Endothelial cell of umbilical vein (primary cell): ENCODE measurements at regions of chr4 and their contacts with region 1.

Region 1: GRCh38 chr4:138090150-138090917 is 151.8 kb downstream of the SLC7A11 start:
- DNase-seq: peak; percentile 90
- H3K4me3 ChIP-seq: peak overlapping the region in 2 of 3 experiments; percentile 11 to 53
- H3K27ac ChIP-seq: no peak overlapping the region
- H3K4me1 ChIP-seq: peaks cover 6% of the 10 kb centered on the region
- H3K27me3 ChIP-seq: no peaks in the 10 kb centered on the region
- CTCF ChIP-seq: peak; percentile 60 to 62
- POLR2A ChIP-seq: no peak

Region 2: GRCh38 chr4:137124278-137124932 is 965.9 kb before region 1 on chr4:
- CTCF ChIA-PET with region 1: interaction called, 13 read pairs
- POLR2A ChIA-PET with region 1: no interaction called
- dilution Hi-C with region 1: no loop called
- intact Hi-C with region 1: no loop called
- DNase-seq: peak; percentile 35
- H3K4me3 ChIP-seq: no peak overlapping the region
- H3K27ac ChIP-seq: no peak overlapping the region
- H3K4me1 ChIP-seq: no peaks in the 10 kb centered on the region
- H3K27me3 ChIP-seq: no peaks in the 10 kb centered on the region
- CTCF ChIP-seq: peak in 1 of 2 donors; percentile 42
- POLR2A ChIP-seq: no peak

Region 3: GRCh38 chr4:138035781-138036258 is 54.5 kb before region 1 on chr4:
- CTCF ChIA-PET with region 1: interaction called, 309 read pairs
- POLR2A ChIA-PET with region 1: interaction called, 4 read pairs
- dilution Hi-C with region 1: no loop called
- intact Hi-C with region 1: loop called (anchors 1 kb)
- DNase-seq: peak; percentile 80
- H3K4me3 ChIP-seq: no peak overlapping the region
- H3K27ac ChIP-seq: peak overlapping the region; percentile 76
- H3K4me1 ChIP-seq: peaks cover 35% of the 10 kb centered on the region
- H3K27me3 ChIP-seq: no peaks in the 10 kb centered on the region
- CTCF ChIP-seq: peak; percentile 36 to 68
- POLR2A ChIP-seq: no peak

Region 4: DNA sequence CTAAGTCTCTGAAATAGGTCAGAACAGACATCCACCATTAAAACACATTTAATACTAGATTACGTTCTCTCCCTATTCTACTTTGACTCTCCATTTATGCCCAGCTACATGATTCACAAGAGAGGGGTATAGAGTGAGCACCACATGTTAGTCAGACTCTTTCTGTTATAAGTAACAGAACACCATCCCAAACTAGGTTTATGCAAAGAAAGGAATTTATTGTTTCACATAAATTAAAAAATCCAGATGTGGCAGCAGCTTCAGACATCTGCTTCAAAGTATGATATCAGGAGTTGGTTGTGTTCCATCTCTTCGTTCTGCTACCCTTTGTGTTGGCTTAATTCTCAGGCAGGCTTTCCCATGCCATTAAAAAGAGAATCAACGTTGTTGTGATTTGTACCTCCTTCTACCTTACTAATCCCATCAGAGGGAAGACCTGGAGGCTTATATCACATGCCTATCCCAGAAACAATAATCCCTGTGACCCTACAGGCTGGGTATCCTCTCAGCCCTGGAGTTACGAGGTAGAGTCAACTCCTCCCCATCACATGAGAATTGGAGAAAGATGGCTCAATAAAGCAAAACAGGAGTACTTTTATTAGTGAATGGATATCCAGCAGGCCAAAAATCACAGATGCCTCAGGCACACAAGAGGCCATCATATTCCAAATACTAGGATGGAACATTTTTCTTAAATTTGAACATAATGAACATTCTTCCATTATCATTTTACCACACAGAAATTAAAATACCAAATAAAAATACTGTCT is 11.4 kb before region 1 on chr4:
- CTCF ChIA-PET with region 1: interaction called, 14 read pairs
- POLR2A ChIA-PET with region 1: no interaction called
- dilution Hi-C with region 1: no loop called
- intact Hi-C with region 1: no loop called
- DNase-seq: no peak
- H3K4me3 ChIP-seq: no peak overlapping the region
- H3K27ac ChIP-seq: no peak overlapping the region
- H3K4me1 ChIP-seq: no peaks in the 10 kb centered on the region
- H3K27me3 ChIP-seq: no peaks in the 10 kb centered on the region
- CTCF ChIP-seq: no peak
- POLR2A ChIP-seq: no peak

Region 5: GRCh38 chr4:138182838-138183426 is 92.6 kb after region 1 on chr4:
- CTCF ChIA-PET with region 1: interaction called, 39 read pairs
- POLR2A ChIA-PET with region 1: no interaction called
- dilution Hi-C with region 1: no loop called
- intact Hi-C with region 1: loop called (anchors 1 kb)
- DNase-seq: peak; percentile 85
- H3K4me3 ChIP-seq: no peak overlapping the region
- H3K27ac ChIP-seq: no peak overlapping the region
- H3K4me1 ChIP-seq: peaks cover 14% of the 10 kb centered on the region
- H3K27me3 ChIP-seq: no peaks in the 10 kb centered on the region
- CTCF ChIP-seq: peak; percentile 43 to 48
- POLR2A ChIP-seq: no peak

Region 6: GRCh38 chr4:138680989-138681604 is 590.8 kb after region 1 on chr4:
- CTCF ChIA-PET with region 1: interaction called, 13 read pairs
- POLR2A ChIA-PET with region 1: no interaction called
- dilution Hi-C with region 1: no loop called
- intact Hi-C with region 1: loop called (anchors 1 kb)
- DNase-seq: peak; percentile 58
- H3K4me3 ChIP-seq: no peak overlapping the region
- H3K27ac ChIP-seq: no peak overlapping the region
- H3K4me1 ChIP-seq: no peaks in the 10 kb centered on the region
- H3K27me3 ChIP-seq: peaks cover 24 to 48% of the 10 kb centered on the region in 2 experiments
- CTCF ChIP-seq: peak; percentile 72 to 76
- POLR2A ChIP-seq: no peak